ENCODE measurements at regions of chr5 and their contacts with region 1.

Region 1: GRCh38 chr5:81751009-81751835 is at the start of gene SSBP2:
- DNase-seq: peak; percentile 100
- total RNA-seq, gene SSBP2: 102 TPM

Region 2: GRCh38 chr5:81469676-81470075 is 281.5 kb before region 1 on chr5:
- intact Hi-C with region 1: no loop called
- DNase-seq: no peak

Region 3: DNA sequence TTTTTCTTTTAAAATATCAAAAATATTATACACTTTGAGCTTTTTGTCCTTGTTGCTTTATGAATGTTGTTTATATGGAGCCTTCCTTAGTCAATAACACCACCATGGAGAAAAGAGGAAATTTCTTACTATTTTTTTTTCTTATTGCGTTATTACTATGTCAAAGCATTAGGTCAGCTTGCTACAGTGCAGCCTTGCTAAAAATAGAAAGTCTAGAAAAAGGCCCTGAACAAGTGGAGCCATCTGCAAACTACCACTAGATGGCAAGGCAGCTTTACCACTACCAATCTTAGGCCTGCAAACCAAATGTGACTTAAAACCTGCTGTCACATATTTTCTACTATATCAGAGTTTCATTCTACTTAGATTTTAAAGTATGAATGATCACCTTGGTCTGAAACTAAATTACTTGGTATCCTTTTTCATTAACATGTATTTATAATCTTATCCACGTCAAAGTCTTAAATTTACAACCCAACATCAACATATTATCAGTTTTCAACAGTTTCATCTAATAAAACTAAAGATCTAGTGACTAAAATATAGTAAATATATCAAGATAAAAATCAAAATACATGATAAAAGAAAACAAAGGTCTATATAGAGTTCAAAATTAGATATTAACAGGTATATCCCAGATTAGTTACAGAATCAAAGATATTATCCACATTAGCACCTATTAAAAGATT is 244.2 kb before region 1 on chr5:
- intact Hi-C with region 1: loop called (anchors 2 kb)
- DNase-seq: no peak

Region 4: DNA sequence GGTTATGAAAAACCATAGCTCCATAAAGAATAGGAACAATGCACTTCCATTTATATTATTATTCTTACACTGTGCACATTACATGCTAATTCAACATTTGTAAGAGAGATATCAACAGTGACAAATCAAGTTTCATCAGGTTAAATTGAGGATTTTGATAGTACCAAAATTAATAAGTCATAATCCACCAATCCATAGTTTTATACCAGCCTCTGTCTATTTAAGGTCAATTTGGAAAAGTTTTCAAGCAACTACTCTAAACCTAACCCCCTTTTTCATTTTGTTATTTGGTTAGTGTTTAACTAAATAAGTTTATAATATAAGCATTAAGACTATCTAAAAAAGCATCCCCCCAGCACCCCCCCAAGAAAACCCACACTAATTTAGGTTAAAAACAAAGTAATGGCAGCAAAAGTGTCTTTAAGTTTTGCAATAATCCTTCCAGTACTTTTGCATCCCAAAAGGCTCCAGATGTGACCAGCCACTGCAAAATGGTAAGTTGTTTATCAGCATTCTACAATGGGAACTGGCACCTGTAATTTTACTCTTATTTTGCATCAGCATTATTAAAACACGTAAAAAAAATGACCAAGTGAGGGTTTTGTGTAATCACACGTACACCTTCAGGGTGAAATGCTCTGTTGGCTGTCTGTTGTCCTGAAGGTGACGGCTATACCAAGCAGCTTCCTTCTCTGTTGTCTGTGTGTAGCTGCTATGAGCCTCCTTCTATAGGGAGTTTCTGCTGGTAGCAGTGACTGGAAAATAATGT is 36.4 kb after region 1 on chr5:
- intact Hi-C with region 1: loop called (anchors 1 kb)
- DNase-seq: no peak

Region 5: DNA sequence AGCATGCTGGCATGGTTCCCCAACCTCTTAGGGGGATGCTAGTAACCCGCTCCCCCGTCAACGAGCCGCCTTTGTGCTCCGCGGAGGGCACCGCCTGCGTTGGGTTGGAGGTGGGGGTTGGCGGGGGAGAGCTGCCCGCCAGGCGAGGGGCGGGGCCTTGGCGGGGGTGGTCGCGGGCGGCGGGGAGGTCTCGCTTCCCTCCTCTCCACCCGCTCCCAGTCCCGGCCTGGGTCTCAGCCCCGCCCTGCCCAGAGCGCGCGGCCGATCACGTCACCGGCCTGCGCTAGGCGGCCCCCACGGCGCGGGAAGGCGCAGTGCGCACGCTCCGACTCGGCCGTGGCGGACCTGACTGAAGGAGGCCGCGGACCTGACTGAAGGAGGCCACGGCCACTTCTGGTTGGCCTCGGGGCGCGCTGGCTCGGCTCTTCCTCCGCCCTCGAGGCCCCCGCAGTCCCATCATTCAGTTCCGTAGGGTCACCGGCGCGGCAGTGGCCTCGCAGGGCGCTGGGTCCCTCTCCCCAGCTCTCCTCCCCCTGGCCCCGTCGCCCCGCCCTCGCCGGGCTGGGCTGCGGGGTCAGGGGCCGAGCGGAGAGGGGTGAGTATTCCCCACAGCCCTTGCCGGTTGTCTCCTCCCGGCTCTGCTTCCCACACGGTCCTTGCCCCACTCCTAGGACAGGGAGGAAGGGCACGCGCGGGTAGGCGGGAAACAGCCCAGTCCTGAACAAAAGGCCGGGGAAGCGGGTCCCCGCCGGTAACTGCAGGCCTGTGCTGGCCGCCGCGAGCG is 220.7 kb after region 1 on chr5 and contains the start of gene ATG10:
- intact Hi-C with region 1: loop called (anchors 5 kb)
- DNase-seq: peak; percentile 97
- total RNA-seq, gene ATG10: 7.1 TPM